ENCODE measurements at regions of chr21 and their contacts with region 1.

Region 1: DNA sequence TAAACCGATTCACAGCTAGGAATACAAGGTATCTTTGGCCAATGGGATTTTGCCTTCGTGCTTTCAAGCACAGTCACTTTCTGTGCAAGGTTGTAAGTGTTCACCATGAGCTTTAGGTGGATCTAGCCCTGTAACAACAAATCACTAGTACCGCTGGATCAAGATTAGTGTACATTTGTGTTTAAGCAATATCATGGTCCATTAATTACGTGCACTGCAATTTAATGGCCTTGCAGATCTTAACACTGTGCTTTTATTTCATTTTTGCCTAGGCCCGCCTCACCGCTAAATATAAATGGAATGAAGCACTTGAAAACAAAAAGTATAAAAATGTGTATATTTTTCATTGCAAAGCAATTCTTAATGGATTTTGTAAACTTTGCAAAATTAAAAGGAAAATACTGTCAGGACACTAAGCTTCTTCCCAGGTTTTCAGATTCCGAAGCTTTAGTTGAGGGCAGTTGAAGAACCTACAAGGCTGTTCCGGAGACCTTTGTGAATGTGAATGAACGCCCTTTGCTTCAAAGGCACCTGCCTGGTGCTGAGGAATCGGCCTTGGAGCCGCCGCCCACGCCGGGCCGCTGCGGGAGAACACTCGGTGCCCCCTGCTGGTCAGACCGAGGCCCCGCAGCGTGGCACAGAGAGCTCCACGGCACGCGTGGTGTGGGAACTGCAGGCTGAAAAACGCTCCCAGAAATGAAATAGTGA is 460.9 kb downstream of the DSCAM start:
- DNase-seq: peak; percentile 78
- H3K4me3 ChIP-seq: peak overlapping the region in 1 of 2 experiments; percentile 10; a peak in 1 of 4 replicates
- H3K27ac ChIP-seq: no peak overlapping the region
- H3K4me1 ChIP-seq: no peaks in the 10 kb centered on the region; a peak in 1 of 4 replicates
- H3K27me3 ChIP-seq: no peaks in the 10 kb centered on the region
- CTCF ChIP-seq: peak; percentile 42
- EP300 ChIP-seq: no peak
- RAD21 ChIP-seq: peak; percentile 83

Region 2: DNA sequence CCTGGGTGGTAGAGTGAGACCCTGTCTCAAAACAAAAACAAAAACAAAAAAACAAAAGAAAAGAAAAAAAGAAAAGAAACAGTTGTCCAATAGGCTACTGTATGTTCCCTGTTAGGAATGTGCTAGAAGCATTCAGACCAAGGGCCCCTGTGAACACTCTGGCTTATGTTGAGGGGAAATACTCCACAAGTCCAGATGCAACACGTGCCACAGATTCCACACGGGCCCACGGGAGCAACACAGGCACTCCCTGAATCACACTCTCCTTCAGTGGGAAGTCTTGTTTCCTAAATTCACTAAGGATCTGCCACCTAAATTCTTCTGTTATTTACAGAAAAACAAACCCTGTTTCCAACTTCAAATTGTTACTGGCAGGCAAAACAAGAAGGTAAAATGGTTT is 227.7 kb before region 1 on chr21:
- CTCF ChIA-PET with region 1: interaction called, 25 read pairs
- POLR2A ChIA-PET with region 1: no interaction called
- DNase-seq: no peak
- H3K4me3 ChIP-seq: no peak overlapping the region
- H3K27ac ChIP-seq: no peak overlapping the region
- H3K4me1 ChIP-seq: no peaks in the 10 kb centered on the region; a peak in 1 of 4 replicates
- H3K27me3 ChIP-seq: no peaks in the 10 kb centered on the region
- CTCF ChIP-seq: no peak
- EP300 ChIP-seq: no peak
- RAD21 ChIP-seq: no peak

Region 3: GRCh38 chr21:40270047-40270446 is 116.0 kb before region 1 on chr21:
- CTCF ChIA-PET with region 1: interaction called, 16 read pairs
- POLR2A ChIA-PET with region 1: no interaction called
- DNase-seq: no peak
- H3K4me3 ChIP-seq: no peak overlapping the region
- H3K27ac ChIP-seq: no peak overlapping the region
- H3K4me1 ChIP-seq: peaks cover 0 to 22% of the 10 kb centered on the region in 2 experiments; a peak in 2 of 4 replicates
- H3K27me3 ChIP-seq: no peaks in the 10 kb centered on the region
- CTCF ChIP-seq: no peak
- EP300 ChIP-seq: no peak
- RAD21 ChIP-seq: no peak

Region 4: DNA sequence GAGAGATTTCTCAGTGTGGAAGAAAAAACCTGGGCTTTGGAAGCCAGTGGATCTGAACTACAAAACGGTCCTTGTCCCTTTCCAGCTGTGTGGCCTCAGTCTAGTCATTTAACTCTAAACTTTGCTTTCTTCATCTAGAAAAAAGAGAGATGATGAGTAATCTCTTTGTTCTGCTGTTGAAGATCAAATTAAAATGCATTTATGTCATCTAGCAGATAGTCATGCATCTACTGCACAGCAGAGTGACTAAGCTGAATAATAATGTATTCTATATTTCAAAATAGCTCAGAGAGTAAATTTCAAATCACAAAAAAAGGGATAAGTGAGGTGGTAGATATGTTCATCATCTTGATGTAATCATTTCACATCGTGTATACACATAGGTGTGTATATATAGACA is 12.3 kb before region 1 on chr21:
- CTCF ChIA-PET with region 1: interaction called, 28 read pairs
- POLR2A ChIA-PET with region 1: no interaction called
- DNase-seq: no peak
- H3K4me3 ChIP-seq: no peak overlapping the region
- H3K27ac ChIP-seq: no peak overlapping the region
- H3K4me1 ChIP-seq: no peaks in the 10 kb centered on the region
- H3K27me3 ChIP-seq: no peaks in the 10 kb centered on the region
- CTCF ChIP-seq: no peak
- EP300 ChIP-seq: no peak
- RAD21 ChIP-seq: no peak

Region 5: GRCh38 chr21:40422896-40423635 is 37.0 kb after region 1 on chr21:
- CTCF ChIA-PET with region 1: interaction called, 13 read pairs
- POLR2A ChIA-PET with region 1: no interaction called
- DNase-seq: peak; percentile 40
- H3K4me3 ChIP-seq: no peak overlapping the region
- H3K27ac ChIP-seq: no peak overlapping the region
- H3K4me1 ChIP-seq: peaks cover 0 to 11% of the 10 kb centered on the region in 2 experiments; a peak in 2 of 4 replicates
- H3K27me3 ChIP-seq: no peaks in the 10 kb centered on the region
- CTCF ChIP-seq: no peak
- EP300 ChIP-seq: peak in 1 of 2 experiments; percentile 50; a peak in 1 of 4 replicates
- RAD21 ChIP-seq: no peak

Region 6: DNA sequence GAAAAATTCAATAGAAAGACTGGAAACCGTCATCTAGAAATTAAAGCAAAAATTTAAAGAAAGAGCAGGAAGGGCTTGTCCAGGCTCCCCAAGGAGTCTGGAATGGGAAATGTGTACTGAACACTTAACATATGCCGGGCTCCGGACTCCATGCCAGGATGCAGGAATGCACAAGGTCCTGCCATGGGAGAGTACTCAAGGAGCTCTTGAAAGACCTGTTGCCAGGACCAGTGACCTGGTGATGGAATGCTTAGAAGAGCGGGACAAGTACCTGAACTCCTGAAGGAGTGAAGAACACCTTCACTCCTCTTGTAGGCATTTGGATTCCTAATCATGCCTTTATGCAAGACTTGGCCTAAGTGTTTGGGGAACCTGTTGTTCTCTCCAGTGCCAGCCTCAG is 477.8 kb after region 1 on chr21:
- CTCF ChIA-PET with region 1: no interaction called
- POLR2A ChIA-PET with region 1: no interaction called
- DNase-seq: no peak
- H3K4me3 ChIP-seq: no peak overlapping the region
- H3K27ac ChIP-seq: no peak overlapping the region
- H3K4me1 ChIP-seq: no peaks in the 10 kb centered on the region
- H3K27me3 ChIP-seq: no peaks in the 10 kb centered on the region
- CTCF ChIP-seq: no peak
- EP300 ChIP-seq: no peak
- RAD21 ChIP-seq: no peak

Measured in SK-N-SH (cell line).